PC-3 (cell line): ENCODE measurements at regions of chr9 and their contacts with region 1.

Region 1: DNA sequence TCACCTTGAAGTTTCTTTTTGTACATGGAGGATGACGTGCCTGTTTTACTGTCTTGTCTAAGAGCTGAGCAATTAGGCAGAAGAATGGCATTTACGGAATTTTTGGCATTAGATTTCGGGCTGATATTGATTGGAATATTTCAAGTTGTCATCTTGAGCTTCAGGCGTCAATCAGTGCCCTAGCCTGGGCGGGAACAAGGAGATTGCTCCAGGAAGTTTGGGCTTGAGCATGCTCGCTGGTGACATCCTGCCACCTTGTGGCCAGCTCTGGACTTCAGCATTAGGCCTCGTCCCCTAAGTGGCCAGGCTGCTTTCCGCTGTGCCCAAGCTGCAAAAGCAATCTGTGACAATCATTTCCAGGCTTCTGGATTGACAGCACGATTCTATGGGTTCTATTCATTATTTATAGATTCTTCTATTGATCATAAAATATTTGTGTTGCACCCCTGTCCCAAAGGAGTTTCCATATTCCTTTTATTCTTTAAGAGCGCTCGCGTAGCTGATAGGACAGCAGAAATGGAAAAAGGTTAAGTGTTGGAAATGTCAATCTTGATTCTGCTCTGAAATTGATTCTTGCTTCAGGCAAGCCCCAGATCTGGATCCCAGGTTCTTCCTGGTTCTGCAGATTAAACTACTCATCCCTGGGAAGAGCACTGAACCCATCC is 79.3 kb downstream of the SLC28A3 start:
- DNase-seq: peak; percentile 80
- ATAC-seq: peak; percentile 97
- H3K4me3 ChIP-seq: no peak overlapping the region
- H3K27ac ChIP-seq: no peak overlapping the region
- H3K4me1 ChIP-seq: no peaks in the 10 kb centered on the region
- H3K27me3 ChIP-seq: 0 out of 2 replicates have a peak, but pooled peaks cover 5% of the 10 kb centered on the region
- CTCF ChIP-seq: peak; percentile 86

Region 2: GRCh38 chr9:83920927-83921707 is 340.1 kb before region 1 on chr9 and contains the start of gene KIF27:
- CTCF ChIA-PET with region 1: no interaction called
- POLR2A ChIA-PET with region 1: no interaction called
- intact Hi-C with region 1: loop called (anchors 5 kb)
- DNase-seq: peak; percentile 93
- ATAC-seq: peak; percentile 95
- H3K4me3 ChIP-seq: peak within 1 kb of the TSS; percentile 57
- H3K27ac ChIP-seq: peak within 1 kb of the TSS; percentile 59
- H3K4me1 ChIP-seq: peaks cover 9% of the 10 kb centered on the region
- H3K27me3 ChIP-seq: no peaks in the 10 kb centered on the region
- CTCF ChIP-seq: peak; percentile 46; the same call in 1 of the 2 replicates
- total RNA-seq, gene KIF27: 2.2 and 3.2 TPM in 2 replicates

Region 3: GRCh38 chr9:83980395-83981125 is 280.7 kb before region 1 on chr9 and contains the start of gene RMI1:
- CTCF ChIA-PET with region 1: no interaction called
- POLR2A ChIA-PET with region 1: no interaction called
- intact Hi-C with region 1: loop called (anchors 5 kb)
- DNase-seq: peak; percentile 95
- ATAC-seq: peak; percentile 75
- H3K4me3 ChIP-seq: peak within 1 kb of the TSS; percentile 94
- H3K27ac ChIP-seq: peak within 1 kb of the TSS; percentile 94
- H3K4me1 ChIP-seq: peaks cover 21% of the 10 kb centered on the region
- H3K27me3 ChIP-seq: no peaks in the 10 kb centered on the region
- CTCF ChIP-seq: no peak; the same call in 1 of the 2 replicates
- total RNA-seq, gene RMI1: 5.0 and 6.2 TPM in 2 replicates

Region 4: GRCh38 chr9:83992421-83992820 is 268.8 kb before region 1 on chr9:
- CTCF ChIA-PET with region 1: no interaction called
- POLR2A ChIA-PET with region 1: no interaction called
- intact Hi-C with region 1: loop called (anchors 1 kb)
- DNase-seq: peak; percentile 64
- ATAC-seq: peak; percentile 78
- H3K4me3 ChIP-seq: no peak overlapping the region
- H3K27ac ChIP-seq: no peak overlapping the region
- H3K4me1 ChIP-seq: peaks cover 12% of the 10 kb centered on the region
- H3K27me3 ChIP-seq: no peaks in the 10 kb centered on the region
- CTCF ChIP-seq: peak; percentile 46; the same call in 1 of the 2 replicates

Region 5: DNA sequence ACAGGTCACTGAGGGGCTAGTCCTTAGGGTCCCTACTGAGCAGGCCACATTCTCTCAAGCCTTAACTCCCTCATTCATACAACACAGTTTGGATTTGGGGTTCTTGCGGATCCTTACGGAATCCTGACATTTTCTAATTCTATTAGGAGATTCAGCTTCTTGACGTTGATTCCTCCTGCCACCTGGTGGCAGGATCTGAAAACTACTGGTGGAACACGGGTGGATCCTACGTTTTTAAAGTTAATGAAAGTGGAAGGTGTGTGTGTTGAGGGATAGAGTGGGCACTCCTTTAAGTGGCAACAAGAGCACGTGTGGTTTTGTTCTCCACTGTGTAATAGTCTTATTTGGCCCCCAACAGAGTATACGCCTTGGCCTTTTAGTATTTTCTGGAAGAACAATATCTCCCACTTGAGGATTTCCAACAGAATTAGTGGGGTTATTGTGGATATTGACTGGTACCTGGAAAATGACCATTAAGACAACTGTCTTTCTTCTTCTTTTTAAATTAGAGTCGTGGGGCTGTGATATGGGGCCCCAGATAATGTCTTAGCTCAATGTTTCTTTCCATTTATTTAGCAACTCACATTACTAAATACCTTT is 54.2 kb after region 1 on chr9:
- CTCF ChIA-PET with region 1: no interaction called
- POLR2A ChIA-PET with region 1: no interaction called
- intact Hi-C with region 1: loop called (anchors 2 kb)
- DNase-seq: peak; percentile 76
- ATAC-seq: peak; percentile 74
- H3K4me3 ChIP-seq: peak overlapping the region; percentile 33; the same call in 1 of the 2 replicates
- H3K27ac ChIP-seq: no peak overlapping the region
- H3K4me1 ChIP-seq: no peaks in the 10 kb centered on the region
- H3K27me3 ChIP-seq: no peaks in the 10 kb centered on the region
- CTCF ChIP-seq: peak; percentile 75